Tibial artery (tissue), 4 donors: ENCODE measurements at regions of chr16 and their contacts with region 1.

Region 1: GRCh38 chr16:78705694-78706093 is 606.2 kb downstream of the WWOX start:
- DNase-seq: no peak
- H3K4me3 ChIP-seq: no peak overlapping the region
- H3K27ac ChIP-seq: no peak overlapping the region
- H3K4me1 ChIP-seq: no peaks in the 10 kb centered on the region
- H3K27me3 ChIP-seq: no peaks in the 10 kb centered on the region
- CTCF ChIP-seq: peak in 1 of 2 experiments; percentile 15

Region 2: DNA sequence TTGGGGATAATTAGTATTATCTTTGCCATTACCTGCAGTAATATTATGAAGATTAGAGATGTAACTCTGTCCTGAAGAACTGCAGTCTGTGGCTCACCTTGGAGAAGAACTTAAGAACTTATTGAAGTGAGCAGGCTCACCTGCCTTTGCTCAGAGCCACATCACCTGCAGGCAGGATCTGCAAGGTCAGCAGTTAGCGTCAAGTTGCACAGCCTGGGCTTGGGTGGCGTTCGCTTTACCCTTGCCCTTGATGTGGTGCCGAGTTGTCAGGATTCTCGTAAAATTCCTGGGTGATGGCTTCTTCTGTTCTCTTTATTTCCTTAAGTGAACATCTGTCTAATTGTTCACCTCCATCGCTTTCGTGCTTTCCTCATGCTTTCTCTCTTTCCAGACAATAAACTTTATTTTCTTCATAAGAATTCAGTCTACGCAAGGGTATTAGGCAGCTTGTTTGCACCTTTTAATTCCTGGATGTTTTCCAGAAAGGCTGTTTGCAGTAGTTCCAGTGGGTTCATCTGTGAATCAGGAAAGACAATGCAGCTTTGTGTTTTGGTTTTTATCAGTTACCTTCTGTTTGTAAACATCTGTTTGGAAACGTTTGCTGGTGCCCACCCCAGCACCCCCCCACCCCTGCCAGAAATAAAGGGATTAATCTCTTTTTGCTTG is 352.0 kb before region 1 on chr16:
- intact Hi-C with region 1: no loop called
- DNase-seq: no peak
- H3K4me3 ChIP-seq: no peak overlapping the region
- H3K27ac ChIP-seq: no peak overlapping the region
- H3K4me1 ChIP-seq: no peaks in the 10 kb centered on the region
- H3K27me3 ChIP-seq: no peaks in the 10 kb centered on the region
- CTCF ChIP-seq: no peak

Region 3: GRCh38 chr16:78690510-78690909 is 15.2 kb before region 1 on chr16:
- intact Hi-C with region 1: loop called (anchors 2 kb)
- DNase-seq: no peak
- H3K4me3 ChIP-seq: no peak overlapping the region
- H3K27ac ChIP-seq: no peak overlapping the region
- H3K4me1 ChIP-seq: peaks cover 0 to 24% (median 8%) of the 10 kb centered on the region in 4 donors
- H3K27me3 ChIP-seq: no peaks in the 10 kb centered on the region
- CTCF ChIP-seq: no peak

Region 4: DNA sequence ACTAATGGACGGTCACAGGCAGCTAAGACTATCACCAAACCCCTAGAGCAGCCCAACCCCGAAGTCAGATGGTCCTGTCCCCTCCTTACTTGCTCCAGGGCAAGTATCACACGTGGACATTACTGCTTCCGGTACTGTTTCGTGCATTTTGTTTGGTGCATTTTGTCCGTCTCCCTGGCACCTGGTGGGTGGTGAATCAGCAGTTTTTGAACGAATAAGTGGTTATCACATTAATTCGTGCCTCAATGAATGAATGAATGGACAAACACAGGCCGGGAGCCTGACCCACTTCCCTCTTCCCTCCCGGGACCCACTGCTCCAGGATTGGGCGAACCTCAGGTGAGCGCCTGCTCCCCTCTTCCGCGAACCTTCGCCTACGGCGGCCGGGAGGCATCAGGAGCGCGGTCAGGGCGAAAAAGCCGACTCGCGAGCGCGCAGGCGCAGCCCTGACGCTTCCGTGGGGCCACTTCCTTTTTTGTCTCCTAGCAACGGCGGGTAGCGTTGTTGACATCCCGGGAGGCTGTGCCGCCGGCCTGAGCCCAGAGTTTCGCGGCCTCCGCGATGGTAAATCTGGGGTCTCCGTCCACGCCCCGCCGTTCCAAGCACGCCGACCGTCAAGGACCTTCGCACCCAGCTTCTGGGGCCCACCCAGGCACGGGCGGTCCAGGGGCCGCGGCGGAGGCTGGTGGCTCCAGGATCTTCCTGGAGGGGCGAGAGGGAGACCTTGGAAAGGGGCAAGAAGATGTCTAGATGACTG is 1835.0 kb after region 1 on chr16 and contains the start of gene DYNLRB2:
- intact Hi-C with region 1: no loop called
- DNase-seq: peak; percentile 87 to 95
- H3K4me3 ChIP-seq: peak within 1 kb of the TSS; percentile 65 to 77
- H3K27ac ChIP-seq: peak within 1 kb of the TSS; percentile 72
- H3K4me1 ChIP-seq: peaks cover 0 to 12% (median 8%) of the 10 kb centered on the region in 4 donors
- H3K27me3 ChIP-seq: peaks cover 0 to 7% of the 10 kb centered on the region in 2 donors
- CTCF ChIP-seq: no peak